Activated B cell treated with CpG ODN at 0.5 μM for 24 hours (primary cell): ENCODE measurements at regions of chr2 and their contacts with region 1.

Region 1: GRCh38 chr2:7057865-7058400 is 140.7 kb downstream of the RNF144A start:
- DNase-seq: no peak
- ATAC-seq: peak; percentile 83
- H3K4me3 Mint-ChIP-seq: peak overlapping the region; percentile 61
- H3K27ac Mint-ChIP-seq: peak overlapping the region; percentile 64
- H3K4me1 Mint-ChIP-seq: peaks cover 39% of the 10 kb centered on the region
- H3K27me3 Mint-ChIP-seq: peaks cover 2% of the 10 kb centered on the region
- CTCF ChIP-seq: no peak

Region 2: GRCh38 chr2:7044261-7045250 is 13.4 kb before region 1 on chr2:
- CTCF ChIA-PET with region 1: interaction called, 18 read pairs
- POLR2A ChIA-PET with region 1: no interaction called
- intact Hi-C with region 1: no loop called
- DNase-seq: peak; percentile 32
- ATAC-seq: peak; percentile 65
- H3K4me3 Mint-ChIP-seq: no peak overlapping the region
- H3K27ac Mint-ChIP-seq: no peak overlapping the region
- H3K4me1 Mint-ChIP-seq: peaks cover 3% of the 10 kb centered on the region
- H3K27me3 Mint-ChIP-seq: peaks cover 34% of the 10 kb centered on the region
- CTCF ChIP-seq: peak; percentile 68